ENCODE measurements at regions of chr3 and their contacts with region 1.

Region 1: DNA sequence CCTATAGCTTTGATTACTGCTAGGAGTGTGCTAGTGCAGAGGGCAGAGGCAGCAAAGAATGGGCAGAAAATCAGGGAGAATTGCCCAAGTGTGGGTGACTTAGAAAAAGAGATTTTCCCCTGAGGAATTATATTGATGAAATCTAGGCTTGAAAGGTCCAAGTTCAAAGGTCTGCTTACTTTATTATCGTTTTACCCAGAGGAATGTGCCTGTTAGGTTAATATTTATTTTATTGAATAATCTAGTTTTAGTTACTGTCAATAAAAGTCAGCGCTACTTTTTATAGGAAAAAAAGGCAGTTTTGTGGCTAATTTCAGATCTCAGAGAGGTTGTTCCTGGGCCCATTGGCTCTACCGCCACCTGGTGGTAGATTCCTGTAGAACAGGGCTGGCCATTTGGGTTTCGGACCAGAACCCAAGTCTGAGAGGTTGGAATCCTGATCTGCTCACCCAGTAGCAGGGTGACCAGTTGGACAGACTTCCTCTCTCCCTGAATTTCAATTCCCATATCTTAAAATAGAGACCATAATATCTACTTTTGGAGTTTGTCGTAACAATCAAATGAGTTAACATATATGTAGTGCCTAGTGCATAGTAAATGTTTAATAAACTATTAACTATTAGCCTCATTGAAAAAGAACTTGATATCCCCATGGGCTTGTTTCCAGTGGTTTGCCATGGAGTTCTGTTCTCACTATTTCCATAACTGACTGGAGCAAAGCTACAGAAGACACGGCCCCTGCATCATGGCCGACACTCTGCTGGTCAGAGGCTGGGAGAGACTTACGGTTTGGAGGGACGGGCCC is 62.7 kb upstream of the ZNF148 start:
- DNase-seq: peak; percentile 37
- H3K4me3 Mint-ChIP-seq: no peak overlapping the region
- H3K27ac Mint-ChIP-seq: no peak overlapping the region
- H3K4me1 Mint-ChIP-seq: no peaks in the 10 kb centered on the region
- H3K27me3 Mint-ChIP-seq: peaks cover 2% of the 10 kb centered on the region

Region 2: DNA sequence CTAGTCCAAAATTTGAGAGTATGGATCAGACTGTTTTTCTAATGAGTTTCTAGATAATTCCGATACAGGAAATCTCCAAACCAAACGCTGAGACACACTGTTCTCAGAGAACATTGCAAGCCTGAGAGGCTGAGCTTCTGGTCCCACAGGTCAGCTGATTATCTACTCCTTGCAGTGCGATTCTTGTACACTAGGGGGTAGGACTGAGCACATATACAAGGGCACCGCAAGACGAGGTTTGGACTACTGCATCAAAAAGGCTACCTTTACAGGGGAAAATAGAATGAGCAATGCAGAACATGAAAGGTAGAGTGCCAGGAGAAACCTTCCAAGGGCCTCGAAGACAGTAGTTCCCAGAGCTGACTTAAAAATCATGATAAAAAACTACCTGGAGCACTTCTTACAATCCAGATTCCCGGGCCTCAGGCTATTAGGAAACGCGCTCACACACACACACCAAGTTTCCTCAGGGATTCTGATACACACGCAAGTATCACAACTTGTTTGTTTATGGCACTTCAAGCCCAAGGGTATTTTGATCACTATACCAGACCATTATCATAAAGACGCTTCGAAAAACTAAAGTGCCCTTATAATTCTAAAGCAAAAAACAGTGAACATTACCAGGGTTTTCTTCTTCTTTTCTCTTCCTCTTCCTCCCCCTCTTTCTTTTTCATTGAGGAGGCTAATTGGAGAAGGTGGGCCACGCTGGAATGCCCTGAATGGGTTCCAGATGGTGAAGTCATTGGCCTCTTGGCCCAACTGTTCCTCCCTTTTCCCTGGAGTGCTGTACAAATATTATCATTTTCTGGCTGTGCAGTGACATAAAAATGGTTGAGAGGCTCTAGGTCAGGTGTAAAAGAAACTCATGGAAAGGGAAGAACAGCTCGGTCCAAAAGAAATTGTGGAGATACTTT is 287.1 kb before region 1 on chr3:
- intact Hi-C with region 1: loop called (anchors 1 kb)
- DNase-seq: peak; percentile 48
- H3K4me3 Mint-ChIP-seq: no peak overlapping the region
- H3K27ac Mint-ChIP-seq: no peak overlapping the region
- H3K4me1 Mint-ChIP-seq: peaks cover 26% of the 10 kb centered on the region
- H3K27me3 Mint-ChIP-seq: peaks cover 40% of the 10 kb centered on the region

Measured in activated T-helper 1 cell treated with anti-CD3 and anti-CD28 coated beads, Interleukin-12 subunit alpha, Interleukin-12 subunit beta, Interleukin-2, Interleukin-4 antibody, amounts not matched to agents 30 ng/mL and 10 ng/mL and 1 ng/mL, durations not matched to agents 14 hours and 24 hours and 36 hours (primary cell).